ENCODE measurements at regions of chr4 and their contacts with region 1.

Region 1: GRCh38 chr4:18578307-18578706 is 556.8 kb upstream of the LCORL start:
- DNase-seq: no peak
- ATAC-seq: no peak
- H3K4me3 ChIP-seq: no peak overlapping the region
- H3K4me3 Mint-ChIP-seq: no peak overlapping the region
- H3K27ac ChIP-seq: no peak overlapping the region
- H3K27ac Mint-ChIP-seq: no peak overlapping the region
- H3K4me1 ChIP-seq: no peaks in the 10 kb centered on the region
- H3K4me1 Mint-ChIP-seq: no peaks in the 10 kb centered on the region
- H3K27me3 ChIP-seq: no peaks in the 10 kb centered on the region
- H3K27me3 Mint-ChIP-seq: peaks cover 0 to 21% (median 19%) of the 10 kb centered on the region in 5 donors

Region 2: GRCh38 chr4:18518098-18518497 is 60.2 kb before region 1 on chr4:
- CTCF ChIA-PET with region 1: no interaction called
- POLR2A ChIA-PET with region 1: no interaction called
- intact Hi-C with region 1: loop called in 1 of 2 experiments (anchors 10 kb)
- DNase-seq: no peak
- ATAC-seq: no peak
- H3K4me3 ChIP-seq: no peak overlapping the region
- H3K4me3 Mint-ChIP-seq: no peak overlapping the region
- H3K27ac ChIP-seq: no peak overlapping the region
- H3K27ac Mint-ChIP-seq: no peak overlapping the region
- H3K4me1 ChIP-seq: no peaks in the 10 kb centered on the region
- H3K4me1 Mint-ChIP-seq: no peaks in the 10 kb centered on the region
- H3K27me3 ChIP-seq: no peaks in the 10 kb centered on the region
- H3K27me3 Mint-ChIP-seq: peaks cover 0 to 13% (median 7%) of the 10 kb centered on the region in 5 donors